GM12878 (cell line): ENCODE measurements at regions of chr10 and their contacts with region 1.

Region 1: DNA sequence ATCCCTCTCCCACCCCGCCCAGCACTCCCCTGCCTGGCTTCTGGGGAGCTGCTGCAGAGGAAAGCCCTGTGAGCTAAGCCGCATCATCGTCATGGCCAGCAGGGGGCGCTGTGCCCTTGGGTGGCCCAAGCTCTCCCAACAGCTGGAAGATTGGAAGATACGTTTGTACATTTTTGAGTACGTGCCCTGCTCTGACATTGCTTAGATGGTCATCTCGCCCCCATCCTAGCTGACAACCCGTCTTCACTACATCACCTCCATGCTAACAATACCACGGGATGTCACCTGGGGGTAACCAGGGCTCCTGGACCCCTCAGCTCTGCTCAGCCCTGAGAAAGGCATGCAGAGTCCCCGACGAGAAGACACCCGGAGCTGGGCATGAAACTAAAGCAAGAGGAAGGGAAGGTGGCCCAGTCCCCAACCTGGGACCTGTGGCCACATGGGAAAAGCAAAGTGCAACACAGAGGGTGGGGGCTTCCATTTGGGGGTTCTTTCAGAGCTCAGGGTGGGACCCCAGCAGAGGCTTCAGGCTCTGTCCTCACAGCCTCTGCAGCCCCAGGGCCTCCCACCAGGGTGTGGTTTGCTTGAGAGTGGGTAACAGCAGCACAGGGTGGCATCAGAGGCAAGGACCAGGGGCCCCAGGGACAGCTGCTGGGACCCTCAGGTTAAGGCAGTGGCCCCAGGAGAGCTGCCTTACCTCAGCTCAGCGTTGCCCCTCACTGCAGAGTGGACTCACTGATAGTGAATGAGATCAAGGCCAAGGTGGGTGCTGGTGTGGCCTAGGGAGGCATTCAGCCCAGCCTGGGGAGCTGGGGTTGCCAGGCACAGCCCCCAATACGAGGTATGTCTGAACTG is 136.7 kb downstream of the PTPN20 start:
- DNase-seq: no peak
- ATAC-seq: peak; percentile 95
- H3K4me3 ChIP-seq: no peak overlapping the region
- H3K27ac ChIP-seq: no peak overlapping the region
- H3K4me1 ChIP-seq: no peaks in the 10 kb centered on the region
- H3K27me3 ChIP-seq: peaks cover 0 to 3% of the 10 kb centered on the region in 2 experiments; a peak in 1 of 4 replicates
- CTCF ChIP-seq: peak; percentile 76 to 89 (median 87)
- EP300 ChIP-seq: no peak
- POLR2A ChIP-seq: no peak
- RAD21 ChIP-seq: peak; percentile 85

Region 2: GRCh38 chr10:47024399-47025252 is 23.3 kb before region 1 on chr10:
- CTCF ChIA-PET with region 1: interaction called, 10 read pairs
- POLR2A ChIA-PET with region 1: no interaction called
- RAD21 ChIA-PET with region 1: no interaction called
- SMC1A ChIA-PET with region 1: interaction called, 10 read pairs
- in situ Hi-C with region 1: no loop called
- intact Hi-C with region 1: no loop called
- DNase-seq: peak; percentile 16
- ATAC-seq: peak; percentile 97
- H3K4me3 ChIP-seq: no peak overlapping the region
- H3K27ac ChIP-seq: no peak overlapping the region
- H3K4me1 ChIP-seq: no peaks in the 10 kb centered on the region
- H3K27me3 ChIP-seq: no peaks in the 10 kb centered on the region; a peak in 2 of 4 replicates
- CTCF ChIP-seq: peak; percentile 91 to 94 (median 91)
- EP300 ChIP-seq: no peak
- POLR2A ChIP-seq: no peak
- RAD21 ChIP-seq: peak; percentile 82

Region 3: DNA sequence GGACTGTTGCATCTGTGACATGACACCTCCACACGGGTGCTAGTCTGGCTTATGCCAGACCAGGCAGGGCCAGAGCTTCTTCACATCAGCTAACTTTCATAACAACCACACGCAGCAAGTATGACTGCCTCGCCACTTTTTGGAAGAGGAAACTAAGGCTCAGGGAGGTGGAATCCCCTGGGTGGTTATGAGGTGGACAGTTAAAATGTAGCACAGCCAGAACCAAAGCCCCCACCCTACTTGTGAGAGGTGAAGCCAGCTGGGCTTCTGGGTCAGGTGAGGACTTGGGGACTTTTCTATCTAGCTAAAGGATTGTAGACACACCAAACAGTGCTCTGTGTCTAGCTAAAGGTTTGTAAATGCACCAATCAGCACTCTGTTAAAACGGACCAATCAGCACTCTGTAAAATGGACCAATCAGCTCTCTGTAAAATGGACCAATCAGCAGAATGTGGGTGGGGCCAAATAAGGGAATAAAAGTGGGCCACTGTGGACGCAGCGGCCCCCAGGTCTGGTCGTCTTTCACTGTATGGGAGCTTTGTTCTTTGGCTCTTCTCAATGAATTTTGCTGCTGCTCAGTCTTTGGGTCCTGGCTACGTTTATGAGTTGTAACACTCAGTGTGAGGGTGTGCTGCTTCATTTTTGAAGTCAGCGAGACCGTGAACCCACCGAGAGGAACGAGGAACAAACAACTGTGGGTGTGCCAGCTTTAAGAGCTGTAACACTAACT is 34.3 kb after region 1 on chr10:
- CTCF ChIA-PET with region 1: interaction called, 11 read pairs
- POLR2A ChIA-PET with region 1: no interaction called
- RAD21 ChIA-PET with region 1: no interaction called
- SMC1A ChIA-PET with region 1: no interaction called
- in situ Hi-C with region 1: no loop called
- intact Hi-C with region 1: no loop called
- DNase-seq: no peak
- ATAC-seq: no peak
- H3K4me3 ChIP-seq: no peak overlapping the region
- H3K27ac ChIP-seq: no peak overlapping the region
- H3K4me1 ChIP-seq: no peaks in the 10 kb centered on the region
- H3K27me3 ChIP-seq: no peaks in the 10 kb centered on the region; a peak in 1 of 4 replicates
- CTCF ChIP-seq: no peak
- EP300 ChIP-seq: no peak
- POLR2A ChIP-seq: no peak
- RAD21 ChIP-seq: no peak

Region 4: GRCh38 chr10:47115322-47115721 is 67.4 kb after region 1 on chr10:
- CTCF ChIA-PET with region 1: no interaction called
- POLR2A ChIA-PET with region 1: no interaction called
- RAD21 ChIA-PET with region 1: no interaction called
- SMC1A ChIA-PET with region 1: no interaction called
- in situ Hi-C with region 1: no loop called
- intact Hi-C with region 1: no loop called
- DNase-seq: no peak
- ATAC-seq: no peak
- H3K4me3 ChIP-seq: no peak overlapping the region
- H3K27ac ChIP-seq: no peak overlapping the region
- H3K4me1 ChIP-seq: no peaks in the 10 kb centered on the region
- H3K27me3 ChIP-seq: no peaks in the 10 kb centered on the region; a peak in 1 of 4 replicates
- CTCF ChIP-seq: no peak
- EP300 ChIP-seq: no peak
- POLR2A ChIP-seq: no peak
- RAD21 ChIP-seq: no peak

Region 5: DNA sequence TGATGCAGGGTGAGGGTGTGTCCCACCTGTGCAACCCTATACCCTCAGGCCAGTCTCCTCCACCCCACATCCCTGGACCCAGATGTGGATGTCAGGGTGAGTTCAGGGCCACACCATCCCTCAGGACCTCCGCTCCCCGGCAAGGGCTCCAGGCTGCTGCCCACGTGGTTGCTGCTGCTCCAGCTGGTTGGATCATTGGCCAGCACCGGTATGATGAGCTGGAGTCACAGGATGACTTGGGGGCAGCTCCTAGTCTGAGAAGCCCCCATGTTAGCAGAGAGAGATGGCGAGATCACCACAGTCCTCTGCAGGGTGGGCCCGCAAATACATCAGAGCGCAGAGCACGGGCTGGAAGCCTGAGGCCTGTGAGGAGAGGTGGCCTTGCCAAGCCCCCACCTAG is 148.8 kb after region 1 on chr10:
- CTCF ChIA-PET with region 1: no interaction called
- POLR2A ChIA-PET with region 1: no interaction called
- RAD21 ChIA-PET with region 1: no interaction called
- SMC1A ChIA-PET with region 1: no interaction called
- in situ Hi-C with region 1: no loop called
- intact Hi-C with region 1: no loop called
- DNase-seq: no peak
- ATAC-seq: no peak
- H3K4me3 ChIP-seq: no peak overlapping the region
- H3K27ac ChIP-seq: no peak overlapping the region
- H3K4me1 ChIP-seq: no peaks in the 10 kb centered on the region
- H3K27me3 ChIP-seq: no peaks in the 10 kb centered on the region
- CTCF ChIP-seq: no peak
- EP300 ChIP-seq: no peak
- POLR2A ChIP-seq: no peak
- RAD21 ChIP-seq: no peak

Region 6: DNA sequence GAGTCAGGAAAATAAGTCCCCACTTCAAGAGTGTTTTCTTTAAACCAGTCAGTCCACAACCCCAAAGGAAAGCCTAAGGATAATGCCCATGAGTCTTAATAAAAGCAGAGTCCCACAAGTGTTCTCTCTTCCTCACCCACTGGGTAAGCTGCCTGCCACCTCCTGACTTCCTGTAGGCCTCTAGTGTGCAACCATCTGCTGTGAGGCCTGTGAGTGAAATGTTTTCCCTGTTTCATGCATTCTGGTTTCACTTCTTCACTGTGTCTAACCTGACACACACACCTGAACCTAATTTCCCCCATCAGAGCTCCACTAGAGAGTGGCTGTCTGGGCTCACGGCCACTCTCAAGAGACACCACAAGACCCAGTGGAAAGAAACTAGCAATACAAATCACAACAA is 213.2 kb after region 1 on chr10:
- CTCF ChIA-PET with region 1: interaction called, 12 read pairs
- POLR2A ChIA-PET with region 1: no interaction called
- RAD21 ChIA-PET with region 1: interaction called, 4 read pairs
- SMC1A ChIA-PET with region 1: no interaction called
- in situ Hi-C with region 1: no loop called
- intact Hi-C with region 1: no loop called
- DNase-seq: peak; percentile 82
- ATAC-seq: peak; percentile 95
- H3K4me3 ChIP-seq: no peak overlapping the region
- H3K27ac ChIP-seq: no peak overlapping the region
- H3K4me1 ChIP-seq: peaks cover 21% of the 10 kb centered on the region
- H3K27me3 ChIP-seq: no peaks in the 10 kb centered on the region
- CTCF ChIP-seq: no peak
- EP300 ChIP-seq: peak in 1 of 2 experiments; percentile 46; a peak in 1 of 4 replicates
- POLR2A ChIP-seq: no peak
- RAD21 ChIP-seq: no peak

Region 7: DNA sequence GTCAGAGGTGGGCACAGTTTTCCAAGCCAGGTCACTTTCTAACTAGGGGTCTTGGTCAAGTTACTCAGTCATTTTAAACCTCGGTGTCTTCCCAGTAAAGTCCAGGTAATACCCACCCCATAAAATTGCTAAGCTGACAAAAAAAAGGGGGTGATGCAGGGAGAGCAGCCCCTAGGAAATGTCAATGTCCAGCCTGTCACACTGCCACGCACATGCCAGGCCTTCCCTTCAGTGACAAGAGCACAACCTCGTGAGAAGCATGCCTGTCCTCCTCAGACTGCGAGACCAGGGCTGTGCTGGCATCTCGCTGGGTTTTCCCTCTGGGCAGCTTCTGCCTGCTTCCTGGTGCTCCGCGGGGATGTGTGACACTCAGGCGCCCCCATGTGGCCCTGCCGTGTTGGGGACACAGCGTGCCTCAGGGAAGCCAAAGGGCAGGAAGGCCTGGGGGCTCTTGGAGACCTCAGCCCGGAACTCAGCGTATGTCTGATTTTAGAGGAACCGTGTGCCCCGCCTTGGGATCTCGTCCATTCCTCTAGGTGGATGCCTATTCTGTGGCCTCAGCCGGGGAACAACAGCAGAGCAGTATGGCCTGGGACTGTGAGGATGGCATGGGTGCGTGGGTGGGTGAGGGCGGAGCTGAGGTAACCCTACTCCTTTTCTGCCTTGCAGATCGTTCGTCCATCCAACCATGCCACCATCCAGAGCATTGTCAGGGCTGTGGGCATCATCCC is 264.2 kb after region 1 on chr10:
- CTCF ChIA-PET with region 1: interaction called, 135 read pairs
- POLR2A ChIA-PET with region 1: no interaction called
- RAD21 ChIA-PET with region 1: interaction called, 84 read pairs
- SMC1A ChIA-PET with region 1: interaction called, 66 read pairs
- in situ Hi-C with region 1: loop called (anchors 5 kb)
- intact Hi-C with region 1: loop called (anchors 1 kb)
- DNase-seq: peak; percentile 7
- ATAC-seq: peak; percentile 99
- H3K4me3 ChIP-seq: no peak overlapping the region
- H3K27ac ChIP-seq: no peak overlapping the region
- H3K4me1 ChIP-seq: no peaks in the 10 kb centered on the region
- H3K27me3 ChIP-seq: no peaks in the 10 kb centered on the region; a peak in 1 of 4 replicates
- CTCF ChIP-seq: peak; percentile 83 to 97 (median 93); a peak in 5 of 6 replicates
- EP300 ChIP-seq: no peak
- POLR2A ChIP-seq: no peak
- RAD21 ChIP-seq: peak; percentile 97

Region 8: DNA sequence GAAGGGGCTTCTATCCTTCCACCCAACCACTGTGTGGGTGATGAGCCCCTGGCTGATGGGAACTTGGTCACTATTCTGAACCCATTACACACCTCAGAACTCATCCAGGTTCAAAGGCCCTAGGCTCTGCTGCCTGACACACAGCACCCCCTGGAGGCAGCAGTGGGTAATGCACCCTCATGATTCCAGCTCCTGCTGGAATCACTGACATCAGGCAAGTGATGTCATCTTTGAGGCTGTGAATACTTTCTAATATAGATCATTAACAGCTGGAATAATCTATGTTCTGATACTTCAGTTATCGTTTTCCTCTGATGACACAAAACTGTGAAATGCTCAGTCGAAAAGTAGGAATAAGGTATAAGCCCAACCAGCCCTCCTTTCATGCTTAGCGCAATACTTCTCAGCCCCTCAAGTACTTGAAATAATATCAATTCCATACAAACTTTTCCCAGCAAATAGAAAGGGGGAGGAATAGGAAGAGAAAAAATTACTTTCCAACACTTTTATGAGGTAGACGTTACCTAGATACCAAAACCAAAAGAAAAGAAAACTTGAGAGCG is 292.8 kb after region 1 on chr10:
- CTCF ChIA-PET with region 1: interaction called, 17 read pairs
- POLR2A ChIA-PET with region 1: no interaction called
- RAD21 ChIA-PET with region 1: interaction called, 7 read pairs
- SMC1A ChIA-PET with region 1: interaction called, 7 read pairs
- in situ Hi-C with region 1: no loop called
- intact Hi-C with region 1: loop called (anchors 1 kb)
- DNase-seq: peak; percentile 9
- ATAC-seq: peak; percentile 81
- H3K4me3 ChIP-seq: no peak overlapping the region
- H3K27ac ChIP-seq: no peak overlapping the region
- H3K4me1 ChIP-seq: no peaks in the 10 kb centered on the region
- H3K27me3 ChIP-seq: no peaks in the 10 kb centered on the region; a peak in 2 of 4 replicates
- CTCF ChIP-seq: peak; percentile 81 to 95 (median 94)
- EP300 ChIP-seq: no peak
- POLR2A ChIP-seq: no peak
- RAD21 ChIP-seq: peak; percentile 67